ENCODE measurements at regions of chr14 and their contacts with region 1.

Region 1: DNA sequence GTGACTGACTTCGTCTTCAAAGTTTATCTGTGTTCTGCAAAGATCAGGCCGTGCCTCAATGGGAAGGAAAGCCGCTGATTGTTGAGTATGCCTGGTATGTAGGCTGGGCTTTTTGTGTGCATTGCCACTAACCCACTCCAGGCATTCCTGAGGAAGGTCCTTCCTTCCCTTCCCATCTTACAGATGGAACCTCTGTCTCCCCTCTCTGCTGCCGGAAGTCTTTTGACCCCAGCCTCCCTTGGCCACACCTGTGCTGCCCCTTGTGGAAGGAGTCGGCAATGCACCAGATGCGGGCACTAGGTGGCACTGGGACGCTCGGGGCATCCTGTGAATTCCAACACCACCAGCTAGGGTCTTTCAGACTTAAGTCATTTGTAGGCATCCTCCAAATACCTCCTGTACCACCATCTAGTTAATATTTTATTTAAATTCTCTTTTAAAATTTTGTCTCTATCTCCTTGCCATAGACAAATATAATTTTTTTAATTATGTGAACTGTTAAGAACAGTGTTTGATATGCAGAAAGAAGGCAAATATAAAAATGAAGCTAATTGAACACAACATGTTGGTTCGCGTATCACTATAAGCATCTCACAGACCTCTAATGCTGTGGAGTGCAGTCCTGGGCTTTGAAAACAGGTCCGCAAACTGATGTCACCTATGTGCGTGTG is 99.5 kb downstream of the RIN3 start:
- DNase-seq: peak; percentile 80
- ATAC-seq: peak; percentile 38
- H3K4me3 Mint-ChIP-seq: no peak overlapping the region
- H3K27ac Mint-ChIP-seq: peak overlapping the region; percentile 22
- H3K4me1 Mint-ChIP-seq: peaks cover 62% of the 10 kb centered on the region
- H3K27me3 Mint-ChIP-seq: no peaks in the 10 kb centered on the region
- CTCF ChIP-seq: peak; percentile 91

Region 2: GRCh38 chr14:92596331-92596911 is 16.7 kb before region 1 on chr14:
- CTCF ChIA-PET with region 1: interaction called, 11 read pairs
- POLR2A ChIA-PET with region 1: no interaction called
- intact Hi-C with region 1: no loop called
- DNase-seq: no peak
- ATAC-seq: no peak
- H3K4me3 Mint-ChIP-seq: no peak overlapping the region
- H3K27ac Mint-ChIP-seq: no peak overlapping the region
- H3K4me1 Mint-ChIP-seq: peaks cover 38% of the 10 kb centered on the region
- H3K27me3 Mint-ChIP-seq: no peaks in the 10 kb centered on the region
- CTCF ChIP-seq: no peak

Region 3: GRCh38 chr14:92651106-92651757 is 38.1 kb after region 1 on chr14:
- CTCF ChIA-PET with region 1: interaction called, 38 read pairs
- POLR2A ChIA-PET with region 1: interaction called, 9 read pairs
- intact Hi-C with region 1: loop called (anchors 5 kb)
- DNase-seq: peak; percentile 94
- ATAC-seq: peak; percentile 82
- H3K4me3 Mint-ChIP-seq: peak overlapping the region; percentile 94
- H3K27ac Mint-ChIP-seq: peak overlapping the region; percentile 97
- H3K4me1 Mint-ChIP-seq: peaks cover 73% of the 10 kb centered on the region
- H3K27me3 Mint-ChIP-seq: no peaks in the 10 kb centered on the region
- CTCF ChIP-seq: no peak

Region 4: DNA sequence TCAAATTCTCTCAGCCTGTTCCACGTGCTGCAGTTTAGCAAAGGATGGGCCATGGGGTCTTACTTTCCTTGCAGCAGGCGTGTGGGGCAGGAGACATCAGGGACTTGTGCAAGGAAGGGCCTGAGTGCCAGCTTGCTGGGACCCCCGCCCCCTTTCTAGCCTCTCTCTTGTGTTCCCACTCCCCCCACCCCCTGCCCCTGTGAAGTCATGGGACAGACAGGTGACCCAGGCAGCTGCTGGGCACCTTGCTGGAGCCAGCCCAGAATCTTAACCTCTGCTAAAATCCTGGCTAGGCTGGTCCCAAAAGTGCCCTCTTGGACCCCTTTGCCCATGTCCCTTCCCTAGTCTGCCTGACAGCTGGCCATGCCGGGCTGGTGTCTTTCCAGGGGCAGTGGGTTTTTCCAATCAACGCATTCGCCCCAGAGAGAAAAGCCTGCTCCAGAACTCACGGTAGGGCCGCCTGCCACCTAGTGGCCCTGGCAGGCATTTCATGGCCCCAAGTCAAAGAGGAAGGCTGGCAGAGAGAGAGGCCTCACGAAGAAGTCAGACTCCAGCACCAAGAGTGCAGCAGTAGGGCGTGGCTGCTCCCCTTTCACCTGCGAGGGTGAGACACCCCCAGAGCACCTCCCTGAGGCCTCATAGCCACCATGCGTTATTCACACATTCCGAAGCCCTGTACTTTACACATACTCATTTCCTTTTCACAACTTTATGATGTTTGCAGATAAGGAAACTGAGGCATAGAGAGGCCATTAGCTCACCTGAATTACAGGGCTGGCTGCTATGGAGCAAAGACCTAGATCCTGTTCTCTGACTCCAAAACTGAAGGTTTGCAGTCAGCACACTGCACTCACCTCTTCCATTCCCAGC is 67.9 kb after region 1 on chr14:
- CTCF ChIA-PET with region 1: interaction called, 30 read pairs
- POLR2A ChIA-PET with region 1: interaction called, 3 read pairs
- intact Hi-C with region 1: no loop called
- DNase-seq: peak; percentile 86
- ATAC-seq: peak; percentile 42
- H3K4me3 Mint-ChIP-seq: no peak overlapping the region
- H3K27ac Mint-ChIP-seq: peak overlapping the region; percentile 80
- H3K4me1 Mint-ChIP-seq: peaks cover 45% of the 10 kb centered on the region
- H3K27me3 Mint-ChIP-seq: no peaks in the 10 kb centered on the region
- CTCF ChIP-seq: peak; percentile 97